ENCODE measurements at regions of chr5 and their contacts with region 1.

Region 1: GRCh38 chr5:65907138-65907537 is 19.2 kb upstream of the ERBIN start:
- DNase-seq: no peak
- ATAC-seq: no peak

Region 2: GRCh38 chr5:65837139-65837538 is 70.0 kb before region 1 on chr5:
- intact Hi-C with region 1: loop called (anchors 10 kb)
- DNase-seq: no peak
- ATAC-seq: no peak